Activated CD8-positive, alpha-beta T cell treated with anti-CD3 and anti-CD28 coated beads for 36 hours (primary cell): ENCODE measurements at regions of chr1 and their contacts with region 1.

Region 1: DNA sequence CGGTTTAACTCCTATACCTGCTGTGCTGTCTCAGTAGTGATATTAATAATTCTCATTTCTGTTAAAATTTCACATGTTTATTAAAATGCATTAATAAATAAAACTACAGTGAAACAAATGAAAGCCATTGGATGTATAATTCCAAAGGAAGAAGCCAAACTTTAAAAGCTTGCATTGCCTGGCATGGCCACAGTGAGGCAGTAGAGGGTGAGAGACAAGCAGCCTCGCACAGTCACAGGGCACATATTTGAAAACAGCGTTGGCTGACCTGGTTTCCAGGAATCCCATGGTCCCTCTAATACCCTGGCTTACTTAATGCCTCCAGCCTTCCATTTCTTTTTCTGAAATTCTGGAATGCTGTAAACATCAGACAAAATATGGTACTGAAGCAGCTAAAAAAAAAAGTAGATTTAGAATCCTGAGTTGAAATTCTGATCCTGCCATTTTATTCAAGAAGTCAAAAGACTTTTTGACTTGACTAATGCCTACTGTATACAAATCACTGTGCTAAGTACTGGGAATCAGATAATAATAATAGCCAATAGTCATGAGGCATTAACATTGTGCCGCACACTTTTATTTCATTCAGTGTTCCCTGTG is 6.7 kb upstream of the RNASEL start:
- DNase-seq: peak; percentile 79
- ATAC-seq: peak; percentile 80
- H3K4me3 Mint-ChIP-seq: no peak overlapping the region
- H3K27ac Mint-ChIP-seq: no peak overlapping the region
- H3K4me1 Mint-ChIP-seq: peaks cover 16% of the 10 kb centered on the region
- H3K27me3 Mint-ChIP-seq: no peaks in the 10 kb centered on the region
- CTCF ChIP-seq: peak; percentile 92

Region 2: GRCh38 chr1:182446033-182446669 is 149.6 kb before region 1 on chr1:
- CTCF ChIA-PET with region 1: no interaction called
- POLR2A ChIA-PET with region 1: no interaction called
- intact Hi-C with region 1: loop called (anchors 10 kb)
- DNase-seq: peak; percentile 52
- ATAC-seq: peak; percentile 81
- H3K4me3 Mint-ChIP-seq: no peak overlapping the region
- H3K27ac Mint-ChIP-seq: no peak overlapping the region
- H3K4me1 Mint-ChIP-seq: no peaks in the 10 kb centered on the region
- H3K27me3 Mint-ChIP-seq: no peaks in the 10 kb centered on the region
- CTCF ChIP-seq: peak; percentile 82

Region 3: DNA sequence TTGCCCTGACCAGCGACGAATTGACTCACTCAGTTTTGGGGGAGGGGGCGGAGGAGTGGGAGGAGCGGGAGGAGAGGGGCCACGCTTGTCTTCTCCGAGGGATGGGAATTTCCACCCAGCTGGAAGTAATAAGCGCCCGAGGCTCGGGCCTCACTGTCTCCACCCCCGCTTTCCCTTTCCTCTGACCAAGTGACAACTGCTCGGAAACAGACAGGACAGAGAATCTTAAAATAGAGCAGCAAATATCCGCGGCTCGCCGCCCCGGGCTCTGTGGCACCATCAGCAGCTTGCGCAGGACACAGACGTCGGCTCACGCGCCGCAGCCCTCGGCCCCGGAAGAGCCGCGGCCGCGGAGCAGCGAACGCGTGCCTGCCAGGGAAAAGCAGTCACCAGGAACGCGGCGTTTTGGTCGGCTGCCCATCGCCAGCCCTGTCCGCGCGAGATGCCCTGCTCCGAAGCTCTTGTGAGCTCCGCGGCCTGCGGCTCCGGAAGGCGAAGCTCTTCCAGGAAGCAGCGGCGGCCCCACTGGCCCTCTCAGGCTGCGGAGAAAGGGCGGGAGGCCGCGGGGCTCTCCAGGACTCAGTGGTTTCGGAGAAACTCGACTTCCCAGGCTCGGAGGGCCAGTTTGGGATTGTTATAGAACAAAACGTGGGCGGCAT is 19.2 kb after region 1 on chr1:
- CTCF ChIA-PET with region 1: interaction called, 53 read pairs
- POLR2A ChIA-PET with region 1: interaction called, 4 read pairs
- intact Hi-C with region 1: no loop called
- DNase-seq: peak; percentile 84
- ATAC-seq: peak; percentile 31
- H3K4me3 Mint-ChIP-seq: peak overlapping the region; percentile 77
- H3K27ac Mint-ChIP-seq: peak overlapping the region; percentile 89
- H3K4me1 Mint-ChIP-seq: peaks cover 57% of the 10 kb centered on the region
- H3K27me3 Mint-ChIP-seq: peaks cover 45% of the 10 kb centered on the region
- CTCF ChIP-seq: no peak

Region 4: DNA sequence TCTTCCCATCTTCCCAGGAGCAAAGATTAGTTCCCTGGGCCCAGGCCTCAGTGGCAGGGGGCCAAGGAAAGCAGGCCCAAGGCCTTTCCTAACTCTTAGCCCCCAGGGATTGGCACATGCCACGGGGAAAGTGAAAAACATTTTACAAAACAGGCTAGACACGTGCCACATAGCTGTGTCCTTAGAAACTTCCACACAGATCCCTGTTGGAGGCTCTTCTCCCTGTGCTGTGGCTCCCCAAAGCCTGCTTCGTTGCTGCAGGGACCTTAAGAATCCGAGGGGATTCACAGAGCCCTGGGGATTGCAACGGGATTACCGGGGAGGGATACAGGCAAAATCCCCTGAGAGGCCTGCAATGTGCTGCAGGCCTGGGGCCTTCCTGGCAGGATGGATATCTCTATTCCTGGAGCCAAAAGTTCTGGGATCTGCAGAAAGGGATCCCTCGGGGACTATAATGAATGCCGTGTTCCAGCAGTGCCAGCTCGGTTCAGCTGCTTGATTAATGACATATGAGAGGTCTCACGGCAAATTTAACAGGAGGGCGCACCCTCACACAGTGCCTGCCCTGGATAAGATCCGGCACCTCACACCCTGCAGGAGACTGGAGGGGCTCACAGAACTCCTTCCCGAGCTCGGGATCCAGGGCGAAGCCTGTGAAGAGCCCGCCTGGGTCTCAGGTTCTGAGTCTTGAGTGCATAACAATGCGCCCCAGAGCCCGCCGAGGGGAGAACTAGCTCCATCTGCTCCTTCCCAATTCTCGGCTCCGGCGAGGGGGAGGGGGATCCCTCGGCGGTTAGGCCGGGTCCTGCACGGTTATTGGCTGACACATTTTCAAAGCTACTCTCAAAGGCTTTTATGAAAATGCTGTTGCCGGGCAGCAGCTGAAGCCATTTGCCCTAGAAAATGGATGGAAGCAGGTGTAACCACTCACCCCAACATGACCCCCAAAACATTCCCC is 103.9 kb after region 1 on chr1:
- CTCF ChIA-PET with region 1: interaction called, 11 read pairs
- POLR2A ChIA-PET with region 1: no interaction called
- intact Hi-C with region 1: no loop called
- DNase-seq: no peak
- ATAC-seq: no peak
- H3K4me3 Mint-ChIP-seq: no peak overlapping the region
- H3K27ac Mint-ChIP-seq: no peak overlapping the region
- H3K4me1 Mint-ChIP-seq: no peaks in the 10 kb centered on the region
- H3K27me3 Mint-ChIP-seq: peaks cover 31% of the 10 kb centered on the region
- CTCF ChIP-seq: no peak

Region 5: DNA sequence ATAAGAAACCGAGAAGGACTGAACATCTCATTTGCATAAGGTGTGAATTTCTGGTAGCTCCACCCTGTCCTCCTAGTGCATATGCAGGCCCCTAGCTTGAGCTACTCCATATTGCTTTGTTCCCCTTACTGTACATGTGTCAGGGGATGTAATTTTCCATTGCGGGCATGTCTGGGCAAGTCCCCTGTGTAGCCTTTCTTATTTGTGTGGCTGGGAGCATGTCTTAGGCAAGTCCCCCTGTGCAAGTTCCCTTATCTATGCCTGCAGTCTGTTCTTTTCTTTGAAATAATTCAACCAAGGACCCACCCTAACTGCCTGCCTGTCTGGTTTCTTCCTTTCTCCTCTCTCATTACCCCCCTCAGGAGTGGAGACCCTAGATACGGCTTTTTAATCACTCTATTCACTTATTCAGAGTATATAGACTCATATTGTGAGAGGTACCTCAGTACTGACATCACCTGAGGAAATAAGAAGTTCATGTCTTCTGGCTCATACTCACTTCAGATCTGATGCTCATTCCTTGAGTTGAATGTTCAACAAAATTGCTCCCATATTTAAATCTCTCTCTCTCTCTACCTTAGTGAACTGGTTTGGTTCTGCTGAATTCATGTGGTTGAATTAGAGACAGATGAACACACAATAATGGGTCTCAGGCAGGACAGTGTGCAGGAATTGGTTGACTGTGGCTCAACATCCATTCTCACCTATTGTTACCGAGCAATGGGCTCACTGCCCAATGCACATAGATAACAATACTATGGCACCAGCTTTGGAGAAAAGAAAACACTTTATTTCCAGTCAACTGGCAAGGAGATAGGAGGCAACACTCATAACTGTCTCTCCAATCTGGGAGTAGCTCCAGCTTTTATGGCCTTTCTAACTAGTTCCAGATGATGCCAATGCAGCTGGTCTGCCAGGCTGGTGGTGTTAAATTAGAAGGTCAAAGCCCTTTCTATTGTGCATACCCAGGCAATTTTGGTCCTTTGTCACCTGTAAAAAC is 166.0 kb after region 1 on chr1:
- CTCF ChIA-PET with region 1: interaction called, 19 read pairs
- POLR2A ChIA-PET with region 1: interaction called, 6 read pairs
- intact Hi-C with region 1: no loop called
- DNase-seq: peak; percentile 41
- ATAC-seq: peak; percentile 61
- H3K4me3 Mint-ChIP-seq: no peak overlapping the region
- H3K27ac Mint-ChIP-seq: peak overlapping the region; percentile 73
- H3K4me1 Mint-ChIP-seq: peaks cover 8% of the 10 kb centered on the region
- H3K27me3 Mint-ChIP-seq: peaks cover 18% of the 10 kb centered on the region
- CTCF ChIP-seq: no peak

Region 6: GRCh38 chr1:182789138-182790076 is 193.7 kb after region 1 on chr1 and contains the start of gene NPL:
- CTCF ChIA-PET with region 1: interaction called, 1,003 read pairs
- POLR2A ChIA-PET with region 1: interaction called, 11 read pairs
- intact Hi-C with region 1: no loop called
- DNase-seq: peak; percentile 85
- ATAC-seq: peak; percentile 93
- H3K4me3 Mint-ChIP-seq: peak within 1 kb of the TSS; percentile 82
- H3K27ac Mint-ChIP-seq: peak within 1 kb of the TSS; percentile 66
- H3K4me1 Mint-ChIP-seq: peaks cover 13% of the 10 kb centered on the region
- H3K27me3 Mint-ChIP-seq: peaks cover 10% of the 10 kb centered on the region
- CTCF ChIP-seq: no peak
- total RNA-seq, gene NPL: 4.5 to 4.9 TPM